A549 (cell line): ENCODE measurements at regions of chr15 and their contacts with region 1.

Region 1: DNA sequence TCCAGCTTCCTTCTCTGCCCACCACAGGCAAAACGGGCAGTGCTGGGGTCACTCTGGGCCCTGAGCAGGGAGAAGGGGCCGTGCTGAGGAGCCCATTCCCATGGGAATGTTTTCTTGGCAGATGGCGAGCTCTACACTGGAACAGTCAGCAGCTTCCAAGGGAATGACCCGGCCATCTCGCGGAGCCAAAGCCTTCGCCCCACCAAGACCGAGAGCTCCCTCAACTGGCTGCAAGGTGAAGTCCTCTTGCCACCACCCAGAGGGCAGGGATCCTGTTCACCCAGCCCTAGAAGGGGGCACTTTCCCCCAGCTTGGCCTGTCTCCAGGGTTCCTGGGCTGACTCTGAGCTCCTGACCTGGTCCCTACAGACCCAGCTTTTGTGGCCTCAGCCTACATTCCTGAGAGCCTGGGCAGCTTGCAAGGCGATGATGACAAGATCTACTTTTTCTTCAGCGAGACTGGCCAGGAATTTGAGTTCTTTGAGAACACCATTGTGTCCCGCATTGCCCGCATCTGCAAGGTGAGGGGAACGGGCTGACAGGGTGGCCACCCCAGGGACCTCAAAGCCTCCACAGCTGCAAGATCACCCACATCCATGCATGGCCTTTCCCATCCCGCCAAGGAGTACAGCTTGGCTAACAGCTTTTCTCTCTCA is 12.4 kb downstream of the CIB1 start:
- DNase-seq: peak; percentile 90 to 95
- ATAC-seq: peak; percentile 89 to 92
- H3K4me3 ChIP-seq: no peak overlapping the region
- H3K27ac ChIP-seq: peak overlapping the region; percentile 70 to 84
- H3K4me1 ChIP-seq: peaks cover 25% of the 10 kb centered on the region
- CTCF ChIP-seq: peak; percentile 91
- EP300 ChIP-seq: no peak
- POLR2A ChIP-seq: no peak
- RAD21 ChIP-seq: peak; percentile 97 to 99

Region 2: DNA sequence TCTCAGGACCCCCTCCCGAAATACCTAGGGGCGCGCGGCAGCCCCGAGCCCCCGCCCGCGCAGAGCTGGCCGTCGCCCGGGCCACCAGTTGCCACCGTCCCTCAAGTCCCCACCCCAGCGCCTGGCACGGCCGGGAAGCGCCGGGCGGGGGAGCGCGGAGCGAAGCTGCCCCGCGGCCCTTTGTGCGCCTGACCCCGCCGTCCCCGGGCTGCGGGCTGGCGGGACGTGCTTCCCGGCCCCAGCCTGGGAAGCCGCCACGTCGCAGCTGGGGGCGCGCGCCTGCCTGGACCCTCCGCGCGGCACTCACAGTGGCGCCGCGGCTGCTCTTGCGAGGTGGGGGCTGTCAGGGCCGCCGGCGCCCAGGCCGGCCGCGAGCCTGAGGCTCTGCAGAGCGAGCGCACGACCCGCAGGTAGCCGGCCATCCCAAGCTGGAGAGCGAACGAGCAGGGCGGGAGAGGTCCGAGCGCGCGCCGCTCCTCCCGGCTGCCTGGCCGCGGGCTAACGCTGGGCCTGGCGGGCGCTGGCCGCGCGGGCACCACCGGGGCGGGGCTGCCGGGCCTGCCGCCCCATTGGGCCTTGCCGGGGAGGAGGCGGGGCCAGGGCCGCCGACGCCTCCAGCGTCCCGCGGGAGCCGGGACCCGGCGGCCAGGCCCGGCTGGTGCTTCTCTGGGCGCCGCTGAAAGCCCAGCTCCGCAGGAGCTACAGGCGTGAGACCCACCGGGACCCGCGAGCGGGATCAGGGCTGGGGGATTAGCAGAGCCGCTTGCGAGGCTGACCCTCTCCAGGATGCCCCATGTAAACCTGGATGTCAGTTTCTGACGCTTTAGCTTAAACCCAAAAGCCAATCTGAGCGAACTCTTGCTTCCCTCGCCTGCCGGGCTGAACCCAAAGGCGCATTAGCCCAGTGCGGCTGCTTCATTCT is 119.1 kb before region 1 on chr15 and contains the start of gene IDH2:
- CTCF ChIA-PET with region 1: interaction called, 11 read pairs
- POLR2A ChIA-PET with region 1: no interaction called
- DNase-seq: peak; percentile 78 to 92
- ATAC-seq: peak; percentile 91 to 95
- H3K4me3 ChIP-seq: peak within 1 kb of the TSS; percentile 87
- H3K27ac ChIP-seq: peak within 1 kb of the TSS; percentile 86 to 92
- H3K4me1 ChIP-seq: peaks cover 33% of the 10 kb centered on the region
- CTCF ChIP-seq: 0 out of 3 replicates have a peak, but pooled peaks have one; percentile 8
- EP300 ChIP-seq: no peak
- POLR2A ChIP-seq: peak; percentile 97
- RAD21 ChIP-seq: no peak
- polyA plus RNA-seq, gene IDH2: 31.8 and 37.7 TPM in 2 replicates

Region 3: GRCh38 chr15:90178468-90179435 is 42.6 kb before region 1 on chr15:
- CTCF ChIA-PET with region 1: interaction called, 20 read pairs
- POLR2A ChIA-PET with region 1: interaction called, 5 read pairs
- DNase-seq: no peak
- ATAC-seq: no peak
- H3K4me3 ChIP-seq: no peak overlapping the region
- H3K27ac ChIP-seq: peak overlapping the region in 1 of 2 experiments; percentile 15; a peak in 3 of 6 replicates
- H3K4me1 ChIP-seq: peaks cover 31% of the 10 kb centered on the region
- CTCF ChIP-seq: no peak
- EP300 ChIP-seq: no peak
- POLR2A ChIP-seq: no peak
- RAD21 ChIP-seq: no peak

Region 4: DNA sequence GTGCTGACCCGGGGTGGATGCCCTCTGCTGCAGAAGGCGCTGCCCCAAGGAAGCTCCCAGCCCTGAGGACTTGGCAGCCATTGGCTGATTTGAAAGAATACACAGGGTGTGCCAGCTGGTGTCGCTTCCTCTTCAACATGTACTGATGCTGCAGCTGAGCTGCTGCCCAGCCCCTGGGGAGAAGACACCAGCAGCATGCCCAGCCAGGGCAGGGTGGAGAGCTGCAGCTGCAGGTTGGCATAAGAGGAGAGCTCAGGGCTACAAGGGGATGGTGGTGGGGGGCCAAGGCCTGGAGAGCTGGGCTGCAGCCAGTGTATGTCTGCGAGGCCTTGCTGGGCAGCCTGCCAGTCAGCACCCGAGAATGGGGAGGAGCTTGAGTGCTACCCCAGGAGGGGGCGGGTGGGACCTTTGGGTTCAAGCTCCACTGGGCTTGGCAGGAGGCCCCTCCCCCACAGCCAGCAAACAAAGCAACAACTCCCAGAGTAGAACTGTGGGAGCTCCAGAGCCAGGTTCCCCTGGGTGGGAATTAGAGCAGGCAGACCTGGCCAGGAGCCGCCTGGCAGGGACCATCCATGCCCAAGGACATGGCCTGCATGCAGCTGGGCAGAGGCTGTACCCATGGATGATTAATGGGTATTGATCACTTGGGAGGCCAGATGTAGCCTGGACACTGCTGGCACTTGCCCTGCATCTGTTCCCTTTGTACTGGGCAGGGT is 29.4 kb before region 1 on chr15:
- CTCF ChIA-PET with region 1: interaction called, 68 read pairs
- POLR2A ChIA-PET with region 1: no interaction called
- DNase-seq: peak in 1 of 2 experiments; percentile 92
- ATAC-seq: peak; percentile 84 to 85
- H3K4me3 ChIP-seq: no peak overlapping the region
- H3K27ac ChIP-seq: peak overlapping the region; percentile 74 to 89
- H3K4me1 ChIP-seq: peaks cover 55% of the 10 kb centered on the region
- CTCF ChIP-seq: no peak
- EP300 ChIP-seq: no peak
- POLR2A ChIP-seq: no peak
- RAD21 ChIP-seq: peak in 1 of 2 experiments; percentile 16; a peak in 1 of 5 replicates

Region 5: GRCh38 chr15:90233376-90234095 is 12.2 kb after region 1 on chr15 and contains the start of gene CIB1:
- CTCF ChIA-PET with region 1: interaction called, 288 read pairs
- POLR2A ChIA-PET with region 1: interaction called, 15 read pairs
- DNase-seq: peak; percentile 85 to 97
- ATAC-seq: peak; percentile 84 to 92
- H3K4me3 ChIP-seq: peak within 1 kb of the TSS; percentile 85
- H3K27ac ChIP-seq: peak within 1 kb of the TSS; percentile 86 to 90
- H3K4me1 ChIP-seq: peaks cover 26% of the 10 kb centered on the region
- CTCF ChIP-seq: no peak; the same call in none of the 3 replicates
- EP300 ChIP-seq: no peak
- POLR2A ChIP-seq: peak; percentile 44
- RAD21 ChIP-seq: no peak; a peak in 1 of 5 replicates
- polyA plus RNA-seq, gene CIB1: 84.1 and 130 TPM in 2 replicates